Caco-2 (cell line): ENCODE measurements at regions of chr7 and their contacts with region 1.

Region 1: GRCh38 chr7:31443457-31443856 is 70.4 kb upstream of the ITPRID1 start:
- DNase-seq: peak in 1 of 2 experiments; percentile 32
- H3K4me3 ChIP-seq: no peak overlapping the region
- H3K4me3 Mint-ChIP-seq: no peak overlapping the region
- H3K27ac Mint-ChIP-seq: no peak overlapping the region
- H3K4me1 ChIP-seq: peaks cover 9% of the 10 kb centered on the region
- H3K4me1 Mint-ChIP-seq: peaks cover 29% of the 10 kb centered on the region
- H3K27me3 ChIP-seq: no peaks in the 10 kb centered on the region
- H3K27me3 Mint-ChIP-seq: no peaks in the 10 kb centered on the region
- CTCF ChIP-seq: peak; percentile 66 to 77

Region 2: GRCh38 chr7:31134246-31135188 is 308.9 kb before region 1 on chr7:
- CTCF ChIA-PET with region 1: interaction called, 4 read pairs
- POLR2A ChIA-PET with region 1: no interaction called
- intact Hi-C with region 1: loop called (anchors 10 kb)
- DNase-seq: peak; percentile 75 to 78
- H3K4me3 ChIP-seq: no peak overlapping the region
- H3K4me3 Mint-ChIP-seq: no peak overlapping the region
- H3K27ac Mint-ChIP-seq: no peak overlapping the region
- H3K4me1 ChIP-seq: no peaks in the 10 kb centered on the region
- H3K4me1 Mint-ChIP-seq: no peaks in the 10 kb centered on the region
- H3K27me3 ChIP-seq: no peaks in the 10 kb centered on the region
- H3K27me3 Mint-ChIP-seq: peaks cover 3% of the 10 kb centered on the region
- CTCF ChIP-seq: peak; percentile 64 to 76

Region 3: DNA sequence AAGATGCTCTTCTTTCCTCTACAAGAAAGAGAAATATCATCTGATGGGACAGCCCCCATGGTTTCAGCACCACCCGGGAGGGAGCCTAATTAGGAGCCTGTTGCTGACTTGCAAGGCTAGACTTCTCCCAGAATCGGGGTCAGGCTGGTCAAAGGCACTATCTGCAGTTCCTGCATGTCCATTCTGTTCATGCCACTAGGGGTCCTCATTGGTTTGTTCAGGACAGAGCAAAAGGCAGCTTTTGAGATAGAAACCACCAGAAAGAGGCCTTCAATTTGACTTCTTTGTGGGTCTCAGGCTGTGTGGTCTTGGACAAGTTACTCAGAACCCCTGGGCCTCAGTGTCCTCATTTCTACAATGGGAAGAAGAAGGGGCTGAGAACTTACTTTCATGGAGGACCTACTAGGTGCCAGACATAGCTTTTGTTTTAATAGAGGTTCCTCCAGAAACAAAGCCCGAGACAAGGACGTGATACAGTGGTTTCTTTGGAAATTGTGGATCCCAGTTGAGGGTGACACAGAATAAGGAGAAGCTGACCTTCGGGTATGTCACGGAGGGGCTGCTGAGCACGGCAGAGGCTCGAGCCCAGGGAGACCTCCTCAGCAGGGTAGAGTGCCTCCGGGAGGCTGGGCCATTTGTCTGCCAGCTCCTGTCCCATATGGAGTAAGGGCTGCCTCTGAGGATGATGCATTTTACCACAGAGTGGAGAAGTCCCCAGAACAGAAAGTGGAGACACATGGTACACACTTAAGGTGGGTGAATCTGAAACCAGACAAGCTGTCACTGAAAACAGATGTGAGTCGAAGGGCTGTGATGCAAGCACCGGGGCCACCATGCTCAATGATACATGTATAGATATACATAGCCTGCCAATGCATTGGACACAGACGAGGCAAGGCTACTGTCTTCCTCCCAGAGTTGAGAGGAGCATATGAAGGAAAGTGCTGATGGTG is 69.8 kb before region 1 on chr7:
- CTCF ChIA-PET with region 1: interaction called, 14 read pairs
- POLR2A ChIA-PET with region 1: no interaction called
- intact Hi-C with region 1: loop called (anchors 1 kb)
- DNase-seq: peak; percentile 72 to 80
- H3K4me3 ChIP-seq: no peak overlapping the region
- H3K4me3 Mint-ChIP-seq: no peak overlapping the region
- H3K27ac Mint-ChIP-seq: no peak overlapping the region
- H3K4me1 ChIP-seq: no peaks in the 10 kb centered on the region
- H3K4me1 Mint-ChIP-seq: no peaks in the 10 kb centered on the region
- H3K27me3 ChIP-seq: no peaks in the 10 kb centered on the region; the same call in 1 of the 2 replicates
- H3K27me3 Mint-ChIP-seq: no peaks in the 10 kb centered on the region
- CTCF ChIP-seq: peak; percentile 79 to 87

Region 4: DNA sequence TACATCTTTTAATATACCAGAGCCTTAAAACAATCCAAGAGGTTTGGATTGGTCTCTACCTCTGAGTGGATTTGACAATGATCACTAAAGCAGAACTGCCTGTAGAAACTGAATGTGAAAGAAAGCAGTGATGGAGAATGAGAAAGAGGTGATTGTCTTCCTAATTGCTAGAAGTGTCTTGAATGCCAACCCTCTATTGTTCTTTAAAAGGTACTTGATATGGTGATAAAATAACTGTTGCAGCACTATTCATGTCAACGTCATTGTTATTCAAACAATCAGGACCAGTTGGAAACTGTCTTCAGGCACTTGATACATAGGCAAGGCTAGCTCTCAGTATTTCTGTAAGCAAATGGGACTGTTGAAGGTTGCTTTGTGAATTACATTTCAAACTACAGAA is 22.6 kb after region 1 on chr7:
- CTCF ChIA-PET with region 1: no interaction called
- POLR2A ChIA-PET with region 1: no interaction called
- intact Hi-C with region 1: no loop called
- DNase-seq: no peak
- H3K4me3 ChIP-seq: no peak overlapping the region
- H3K4me3 Mint-ChIP-seq: no peak overlapping the region
- H3K27ac Mint-ChIP-seq: no peak overlapping the region
- H3K4me1 ChIP-seq: peaks cover 34% of the 10 kb centered on the region
- H3K4me1 Mint-ChIP-seq: peaks cover 57% of the 10 kb centered on the region
- H3K27me3 ChIP-seq: no peaks in the 10 kb centered on the region
- H3K27me3 Mint-ChIP-seq: no peaks in the 10 kb centered on the region
- CTCF ChIP-seq: no peak

Region 5: GRCh38 chr7:31550432-31550831 is 107.0 kb after region 1 on chr7:
- CTCF ChIA-PET with region 1: interaction called, 5 read pairs
- POLR2A ChIA-PET with region 1: no interaction called
- intact Hi-C with region 1: loop called (anchors 2 kb)
- DNase-seq: no peak
- H3K4me3 ChIP-seq: no peak overlapping the region
- H3K4me3 Mint-ChIP-seq: no peak overlapping the region
- H3K27ac Mint-ChIP-seq: no peak overlapping the region
- H3K4me1 ChIP-seq: peaks cover 46% of the 10 kb centered on the region
- H3K4me1 Mint-ChIP-seq: peaks cover 11% of the 10 kb centered on the region
- H3K27me3 ChIP-seq: no peaks in the 10 kb centered on the region
- H3K27me3 Mint-ChIP-seq: no peaks in the 10 kb centered on the region
- CTCF ChIP-seq: no peak

Region 6: GRCh38 chr7:31735991-31736982 is 292.8 kb after region 1 on chr7:
- CTCF ChIA-PET with region 1: no interaction called
- POLR2A ChIA-PET with region 1: no interaction called
- intact Hi-C with region 1: loop called (anchors 1 kb)
- DNase-seq: peak; percentile 61 to 76
- H3K4me3 ChIP-seq: no peak overlapping the region
- H3K4me3 Mint-ChIP-seq: no peak overlapping the region
- H3K27ac Mint-ChIP-seq: no peak overlapping the region
- H3K4me1 ChIP-seq: no peaks in the 10 kb centered on the region
- H3K4me1 Mint-ChIP-seq: no peaks in the 10 kb centered on the region
- H3K27me3 ChIP-seq: no peaks in the 10 kb centered on the region; the same call in 1 of the 2 replicates
- H3K27me3 Mint-ChIP-seq: peaks cover 9% of the 10 kb centered on the region
- CTCF ChIP-seq: peak; percentile 72 to 90